ENCODE measurements at regions of chr9 and their contacts with region 1.

Region 1: GRCh38 chr9:104991144-104991953 is 63.4 kb upstream of the ABCA1 start:
- DNase-seq: peak; percentile 89 to 97 (median 93)
- ATAC-seq: peak; percentile 91 to 96 (median 95)
- H3K4me3 ChIP-seq: peak overlapping the region; percentile 40 to 80 (median 51)
- H3K27ac ChIP-seq: peak overlapping the region; percentile 92 to 98 (median 96)
- H3K4me1 ChIP-seq: peaks cover 17 to 28% (median 20%) of the 10 kb centered on the region in 3 donors
- H3K27me3 ChIP-seq: no peaks in the 10 kb centered on the region
- CTCF ChIP-seq: no peak

Region 2: DNA sequence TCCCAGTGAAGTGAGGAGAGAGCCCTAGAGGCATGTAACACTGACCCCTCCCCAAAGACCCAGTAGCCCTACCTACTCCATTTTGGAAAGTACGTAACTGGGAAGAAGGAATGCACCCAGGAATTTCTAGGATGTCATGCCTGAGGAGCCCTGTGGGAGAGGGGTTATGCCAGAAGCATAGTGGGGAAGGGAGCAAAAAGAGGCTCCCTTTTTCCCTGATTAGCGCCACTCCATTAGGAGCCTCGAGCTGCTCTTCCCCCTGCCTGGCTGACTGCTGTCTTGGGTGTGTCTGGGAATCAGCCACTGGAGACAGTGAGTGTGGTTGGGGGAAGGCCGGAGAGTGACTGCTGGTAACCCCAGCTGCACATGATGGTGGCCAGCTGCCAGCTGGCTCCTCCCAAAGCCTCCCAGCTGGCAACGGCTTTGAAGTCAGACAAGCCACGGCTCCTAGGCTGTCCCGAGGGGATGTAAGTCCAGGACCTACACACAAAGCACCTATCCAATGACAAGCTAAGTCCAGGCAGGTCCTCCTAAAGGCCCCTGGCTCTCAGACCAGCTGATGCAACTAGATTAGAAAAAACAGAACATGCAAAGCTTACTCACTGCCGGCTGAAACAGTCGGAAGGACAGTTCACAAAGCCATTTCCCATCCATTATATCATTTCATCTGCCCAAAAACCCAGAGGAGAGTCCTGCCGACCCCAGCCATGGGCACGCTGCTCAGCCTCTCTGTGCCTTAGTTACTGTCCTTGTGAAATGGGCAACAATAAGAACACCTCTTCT is 73.2 kb after region 1 on chr9:
- intact Hi-C with region 1: loop called in 1 of 3 experiments (anchors 10 kb)
- DNase-seq: peak; percentile 86 to 95 (median 91)
- ATAC-seq: peak; percentile 85 to 91 (median 90)
- H3K4me3 ChIP-seq: no peak overlapping the region
- H3K27ac ChIP-seq: peak overlapping the region; percentile 40 to 83 (median 76)
- H3K4me1 ChIP-seq: peaks cover 19 to 31% (median 27%) of the 10 kb centered on the region in 3 donors
- H3K27me3 ChIP-seq: no peaks in the 10 kb centered on the region
- CTCF ChIP-seq: no peak